ENCODE measurements at regions of chr22 and their contacts with region 1.

Region 1: DNA sequence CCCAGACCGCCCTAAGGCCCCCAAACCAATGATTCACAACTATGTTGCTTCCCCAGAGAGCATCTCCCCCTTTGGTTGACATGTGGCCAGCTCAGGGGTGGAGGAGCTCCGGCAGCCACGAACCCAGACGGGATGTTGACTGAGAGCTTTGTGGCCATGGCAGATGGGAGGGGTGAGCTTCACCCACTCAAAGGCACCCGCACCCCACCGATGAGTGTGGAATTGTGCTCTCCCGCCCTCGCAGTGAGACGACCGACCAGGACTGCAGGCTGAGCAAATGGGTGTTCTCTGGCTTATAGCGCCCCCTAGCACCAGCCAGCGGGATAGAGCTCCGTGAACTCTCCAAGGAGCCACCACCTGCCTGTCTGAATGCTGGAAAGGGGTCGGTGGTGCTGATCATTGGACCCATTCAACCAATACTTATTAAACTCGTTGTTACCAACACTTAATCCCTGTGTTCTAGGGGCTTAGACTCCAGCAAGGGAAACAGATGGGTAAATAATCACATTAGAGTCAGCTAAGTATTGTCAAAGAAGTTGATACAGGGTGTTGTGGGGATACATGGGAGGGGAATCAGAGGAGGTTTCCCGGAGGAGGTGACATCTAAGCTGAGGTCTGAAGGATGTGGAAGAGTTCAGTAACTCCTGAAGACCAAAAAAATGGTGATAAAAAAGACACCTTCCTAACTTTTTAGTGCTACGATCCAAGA is 4.5 kb upstream of the TIMP3 start:
- DNase-seq: peak; percentile 82

Region 2: GRCh38 chr22:32528984-32529982 is 267.7 kb before region 1 on chr22:
- intact Hi-C with region 1: loop called (anchors 1 kb)
- DNase-seq: peak; percentile 88

Region 3: DNA sequence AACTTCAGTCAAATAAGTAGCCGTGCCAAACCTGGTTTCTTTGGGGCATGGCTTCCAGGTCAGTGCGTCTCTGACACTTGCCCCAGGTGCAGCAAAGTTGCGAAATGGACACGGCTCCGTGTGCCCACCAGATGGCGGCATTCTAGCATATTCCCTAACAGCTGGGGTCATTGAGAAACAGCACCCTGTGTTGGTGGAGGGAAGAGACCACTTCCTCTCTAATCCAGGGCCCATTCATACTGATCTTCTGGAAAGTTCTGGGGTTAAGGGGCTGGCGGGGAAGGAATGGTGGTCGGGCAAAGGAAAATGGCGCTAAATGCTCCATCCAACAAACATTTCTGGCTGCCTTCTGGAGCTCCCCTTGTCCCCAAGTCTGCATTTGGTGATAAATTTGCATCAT is 136.7 kb before region 1 on chr22:
- intact Hi-C with region 1: loop called (anchors 1 kb)
- DNase-seq: no peak

Region 4: GRCh38 chr22:32764330-32765131 is 32.5 kb before region 1 on chr22:
- intact Hi-C with region 1: loop called (anchors 5 kb)
- DNase-seq: peak; percentile 61

Region 5: DNA sequence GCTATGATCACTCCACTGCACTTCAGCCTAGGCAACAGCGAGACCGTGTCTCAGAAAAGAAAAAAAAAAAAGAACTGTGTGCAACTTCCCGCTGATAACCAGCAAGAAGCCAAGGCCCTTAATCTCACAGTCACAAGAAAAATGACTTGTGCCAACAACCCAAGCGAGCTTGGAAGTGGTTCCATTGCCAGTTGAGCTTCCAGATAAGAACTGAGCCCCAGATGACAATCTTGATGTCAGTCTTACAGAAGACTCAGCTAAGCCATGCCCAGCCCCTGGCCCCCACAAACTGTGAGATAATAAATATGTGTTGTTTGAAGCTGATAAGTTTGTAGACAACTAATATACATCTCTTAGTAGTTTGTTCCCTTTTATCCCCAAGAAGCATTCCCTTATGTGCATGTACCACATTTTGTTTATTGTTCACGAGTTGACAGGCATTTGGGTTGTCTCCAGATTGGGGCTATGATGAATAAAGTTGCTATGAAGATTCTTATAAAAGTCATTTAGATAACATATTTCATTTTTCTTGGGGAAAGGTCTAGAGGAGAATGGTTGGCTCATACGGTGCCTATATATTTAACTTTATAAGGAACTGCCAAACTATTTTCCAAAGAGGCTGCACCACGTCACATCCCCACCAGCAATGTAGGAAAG is 90.4 kb after region 1 on chr22:
- intact Hi-C with region 1: loop called (anchors 5 kb)
- DNase-seq: no peak

Region 6: GRCh38 chr22:32985899-32986765 is 189.1 kb after region 1 on chr22:
- intact Hi-C with region 1: loop called (anchors 2 kb)
- DNase-seq: peak; percentile 81

Measured in cardiac septum (tissue), 1 donor.